SK-N-SH (cell line): ENCODE measurements at regions of chr14 and their contacts with region 1.

Region 1: DNA sequence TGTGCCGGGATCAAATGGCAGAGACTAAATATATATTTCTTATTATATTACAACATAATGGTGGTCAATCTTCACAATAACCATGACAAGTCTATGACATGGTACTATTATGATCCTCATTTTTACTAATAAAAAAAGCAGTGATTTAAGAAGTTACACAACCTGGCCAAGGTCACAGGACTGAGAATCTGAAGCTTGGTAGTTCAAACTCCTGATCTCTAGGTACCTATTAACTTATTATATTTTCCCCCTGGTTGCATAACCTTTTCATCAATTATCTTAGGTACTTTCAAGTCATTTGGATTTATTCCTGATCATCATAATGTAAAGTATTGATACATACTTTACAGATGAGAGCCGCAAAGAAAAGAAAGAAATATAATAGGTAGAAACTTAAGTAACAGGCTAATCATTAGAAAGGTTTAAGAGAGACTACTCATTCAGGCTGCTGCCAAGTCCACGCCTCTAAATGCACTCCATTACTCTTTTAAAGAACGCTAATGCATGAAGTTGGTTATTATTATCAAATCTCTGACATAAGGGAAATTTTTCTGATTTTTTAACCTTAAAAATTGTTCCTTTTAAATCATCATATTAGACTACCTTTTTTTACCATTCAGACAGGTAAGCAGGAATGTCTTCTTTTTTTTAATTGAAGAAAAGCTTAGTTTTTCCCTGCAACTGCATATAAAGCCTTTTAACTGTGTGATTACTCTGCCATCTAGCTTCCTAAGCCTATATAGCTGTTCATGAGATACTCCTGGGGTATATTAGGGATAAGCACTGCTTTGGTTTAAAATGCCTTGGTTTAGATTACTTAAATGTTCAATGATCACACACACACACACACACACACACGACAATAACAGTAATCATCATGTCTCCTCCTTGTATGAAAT is 35.6 kb downstream of the RPS29 start:
- DNase-seq: peak; percentile 26
- H3K4me3 ChIP-seq: no peak overlapping the region
- H3K27ac ChIP-seq: no peak overlapping the region
- H3K4me1 ChIP-seq: peaks cover 0 to 4% of the 10 kb centered on the region in 2 experiments; a peak in 1 of 4 replicates
- H3K27me3 ChIP-seq: no peaks in the 10 kb centered on the region
- CTCF ChIP-seq: peak; percentile 45
- EP300 ChIP-seq: no peak
- RAD21 ChIP-seq: peak; percentile 58

Region 2: GRCh38 chr14:49483268-49483667 is 67.3 kb before region 1 on chr14:
- CTCF ChIA-PET with region 1: interaction called, 11 read pairs
- POLR2A ChIA-PET with region 1: no interaction called
- DNase-seq: peak; percentile 31
- H3K4me3 ChIP-seq: no peak overlapping the region
- H3K27ac ChIP-seq: peak overlapping the region in 1 of 2 experiments; percentile 60; a peak in 2 of 4 replicates
- H3K4me1 ChIP-seq: peaks cover 0 to 8% of the 10 kb centered on the region in 2 experiments; a peak in 2 of 4 replicates
- H3K27me3 ChIP-seq: no peaks in the 10 kb centered on the region; the same call in 1 of the 2 replicates
- CTCF ChIP-seq: no peak
- EP300 ChIP-seq: no peak
- RAD21 ChIP-seq: no peak

Region 3: GRCh38 chr14:49538926-49539325 is 11.6 kb before region 1 on chr14:
- CTCF ChIA-PET with region 1: interaction called, 11 read pairs
- POLR2A ChIA-PET with region 1: no interaction called
- DNase-seq: no peak
- H3K4me3 ChIP-seq: no peak overlapping the region
- H3K27ac ChIP-seq: no peak overlapping the region
- H3K4me1 ChIP-seq: no peaks in the 10 kb centered on the region
- H3K27me3 ChIP-seq: no peaks in the 10 kb centered on the region; the same call in 1 of the 2 replicates
- CTCF ChIP-seq: no peak
- EP300 ChIP-seq: no peak
- RAD21 ChIP-seq: no peak

Region 4: GRCh38 chr14:49677643-49678042 is 127.1 kb after region 1 on chr14:
- CTCF ChIA-PET with region 1: no interaction called
- POLR2A ChIA-PET with region 1: no interaction called
- DNase-seq: peak; percentile 32
- H3K4me3 ChIP-seq: no peak overlapping the region
- H3K27ac ChIP-seq: no peak overlapping the region
- H3K4me1 ChIP-seq: no peaks in the 10 kb centered on the region
- H3K27me3 ChIP-seq: no peaks in the 10 kb centered on the region
- CTCF ChIP-seq: no peak
- EP300 ChIP-seq: no peak
- RAD21 ChIP-seq: no peak